Common myeloid progenitor, CD34-positive (primary cell): ENCODE measurements at regions of chr5 and their contacts with region 1.

Region 1: GRCh38 chr5:118611332-118611945 is 376.9 kb downstream of the DTWD2 start:
- DNase-seq: peak; percentile 12 to 39 (median 27)
- H3K4me3 ChIP-seq: no peak overlapping the region
- H3K27ac ChIP-seq: no peak overlapping the region
- H3K4me1 ChIP-seq: no peaks in the 10 kb centered on the region
- H3K27me3 ChIP-seq: no peaks in the 10 kb centered on the region

Region 2: DNA sequence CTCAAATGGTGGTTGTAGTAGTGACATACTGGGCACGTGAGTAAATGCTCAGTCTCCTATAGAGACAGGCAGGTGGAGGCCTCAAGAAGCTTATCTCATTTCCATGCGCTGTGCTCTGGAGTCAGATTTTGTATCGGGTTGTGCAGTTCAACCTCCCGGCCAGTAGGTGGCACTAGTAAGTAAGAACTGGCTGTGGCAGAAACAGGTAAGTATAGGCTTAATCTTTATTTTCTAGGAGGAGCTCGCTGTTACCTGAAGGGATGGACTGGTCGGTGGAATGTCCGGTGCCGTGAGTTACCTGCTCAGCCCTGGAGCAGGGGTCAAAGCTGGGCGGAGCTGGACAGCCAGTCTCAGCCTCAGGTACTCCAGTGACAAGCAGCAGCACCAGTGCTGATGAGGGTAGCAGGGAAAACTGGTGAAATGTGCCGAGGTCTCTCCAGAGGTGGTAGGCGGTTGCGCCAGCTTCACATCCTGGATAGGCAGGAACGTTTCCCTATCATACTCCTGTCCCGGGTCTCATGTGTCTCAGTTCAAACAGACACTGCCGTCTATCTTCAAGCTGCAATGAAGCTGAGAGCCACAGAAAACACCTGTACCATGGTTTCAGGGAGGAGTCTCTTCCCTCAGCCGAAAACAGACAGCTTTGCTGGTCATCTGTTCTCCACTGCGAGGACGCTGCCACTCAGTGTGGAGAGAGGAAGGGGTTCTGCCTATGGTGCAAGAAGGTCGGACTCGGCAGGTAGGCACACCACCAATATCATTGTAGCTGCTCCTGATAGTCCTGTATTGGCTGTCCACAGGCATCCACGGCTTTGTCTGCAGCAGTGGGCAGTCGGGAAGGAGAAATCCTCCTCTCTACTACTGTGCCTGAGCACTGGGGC is 1156.5 kb before region 1 on chr5:
- CTCF ChIA-PET with region 1: interaction called, 28 read pairs
- POLR2A ChIA-PET with region 1: no interaction called
- DNase-seq: peak; percentile 73 to 82 (median 81)
- H3K4me3 ChIP-seq: peak overlapping the region; percentile 48 to 95 (median 69)
- H3K27ac ChIP-seq: peak overlapping the region in 1 of 2 experiments; percentile 25
- H3K4me1 ChIP-seq: peaks cover 0 to 9% (median 6%) of the 10 kb centered on the region in 4 experiments
- H3K27me3 ChIP-seq: peaks cover 0 to 2% (median 0%) of the 10 kb centered on the region in 5 experiments

Region 3: DNA sequence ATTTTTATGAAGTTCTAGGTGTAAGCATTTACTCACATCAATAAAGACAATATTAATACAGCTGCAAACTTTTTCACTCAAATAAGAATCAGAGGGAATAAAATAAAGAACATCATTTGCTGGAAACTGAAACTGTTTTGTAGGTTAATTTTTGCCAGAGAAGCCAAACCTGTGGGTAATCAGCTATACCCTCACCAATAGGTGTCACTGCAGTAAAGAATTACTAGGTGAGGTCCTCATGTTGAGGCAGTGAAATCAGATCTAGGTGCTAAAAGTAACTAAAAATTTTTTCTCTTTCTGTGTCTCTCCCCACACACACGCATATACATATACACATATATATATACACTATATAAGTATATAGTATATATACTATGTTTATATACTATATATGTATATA is 1020.5 kb before region 1 on chr5:
- CTCF ChIA-PET with region 1: interaction called, 13 read pairs
- POLR2A ChIA-PET with region 1: no interaction called
- DNase-seq: peak; percentile 38 to 71 (median 69)
- H3K4me3 ChIP-seq: no peak overlapping the region
- H3K27ac ChIP-seq: no peak overlapping the region
- H3K4me1 ChIP-seq: peaks cover 0 to 2% (median 0%) of the 10 kb centered on the region in 4 experiments
- H3K27me3 ChIP-seq: no peaks in the 10 kb centered on the region